ENCODE measurements at regions of chr12 and their contacts with region 1.

Region 1: DNA sequence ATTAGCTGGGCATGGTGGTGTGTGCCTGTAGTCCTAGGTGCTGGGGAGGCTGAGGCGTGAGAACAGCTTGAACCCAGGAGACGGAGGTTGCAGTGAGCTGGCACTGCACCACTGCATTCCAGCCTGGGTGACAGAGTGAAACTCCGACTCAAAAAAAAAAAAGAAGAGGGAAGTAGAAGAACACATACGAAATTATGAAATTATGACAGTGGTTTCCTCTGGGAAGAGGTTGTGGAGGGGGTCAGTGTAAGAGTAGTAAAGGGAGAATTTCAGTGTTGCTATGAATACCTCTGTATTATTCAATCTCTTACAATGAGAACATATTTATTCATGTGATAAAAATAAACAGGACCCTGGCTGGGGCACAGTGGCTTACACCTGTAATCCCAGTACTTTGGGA is 24.7 kb upstream of the CSRNP2 start:
- DNase-seq: no peak
- ATAC-seq: no peak
- H3K4me3 ChIP-seq: no peak overlapping the region
- H3K27ac ChIP-seq: no peak overlapping the region
- H3K4me1 ChIP-seq: peaks cover 0 to 4% (median 0%) of the 10 kb centered on the region in 9 donors
- H3K27me3 ChIP-seq: no peaks in the 10 kb centered on the region
- CTCF ChIP-seq: no peak

Region 2: GRCh38 chr12:51160814-51161459 is 52.8 kb after region 1 on chr12:
- intact Hi-C with region 1: no loop called
- DNase-seq: no peak
- ATAC-seq: peak in 1 of 8 donors; percentile 35
- H3K4me3 ChIP-seq: no peak overlapping the region
- H3K27ac ChIP-seq: no peak overlapping the region
- H3K4me1 ChIP-seq: peaks cover 0 to 7% (median 0%) of the 10 kb centered on the region in 9 donors
- H3K27me3 ChIP-seq: no peaks in the 10 kb centered on the region
- CTCF ChIP-seq: no peak

Region 3: GRCh38 chr12:51183816-51184215 is 75.7 kb after region 1 on chr12:
- intact Hi-C with region 1: no loop called
- DNase-seq: peak; percentile 46 to 65
- ATAC-seq: peak; percentile 52 to 94 (median 83)
- H3K4me3 ChIP-seq: no peak overlapping the region
- H3K27ac ChIP-seq: peak overlapping the region in 3 of 10 donors; percentile 21 to 28 (median 25)
- H3K4me1 ChIP-seq: peaks cover 0 to 5% (median 0%) of the 10 kb centered on the region in 9 donors
- H3K27me3 ChIP-seq: no peaks in the 10 kb centered on the region
- CTCF ChIP-seq: no peak

Region 4: DNA sequence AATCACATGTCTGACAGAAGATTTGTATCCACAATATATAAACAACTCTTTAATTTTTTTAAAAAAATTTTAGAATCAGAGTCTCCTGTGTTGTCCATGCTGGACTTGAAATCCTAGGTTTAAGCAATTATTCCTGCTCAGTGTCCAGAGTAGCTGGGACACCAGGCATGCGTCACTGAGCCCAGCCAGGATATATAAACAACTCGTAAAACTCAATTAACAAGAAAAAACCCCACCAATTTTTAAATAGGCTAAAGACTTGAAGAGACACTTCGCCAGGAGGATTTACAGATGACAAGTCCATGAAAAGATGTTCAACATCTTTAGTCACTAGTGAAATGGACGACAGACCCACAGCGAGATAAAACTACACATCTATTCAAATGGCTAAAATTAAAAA is 480.9 kb after region 1 on chr12:
- intact Hi-C with region 1: loop called in 1 of 10 experiments (anchors 5 kb)
- DNase-seq: no peak
- ATAC-seq: no peak
- H3K4me3 ChIP-seq: no peak overlapping the region
- H3K27ac ChIP-seq: no peak overlapping the region
- H3K4me1 ChIP-seq: peaks cover 0 to 12% (median 10%) of the 10 kb centered on the region in 9 donors
- H3K27me3 ChIP-seq: peaks cover 0 to 90% (median 44%) of the 10 kb centered on the region in 7 donors
- CTCF ChIP-seq: no peak